Psoas muscle (tissue), 8 donors: ENCODE measurements at regions of chr17 and their contacts with region 1.

Region 1: GRCh38 chr17:5249615-5250014 is 15.0 kb upstream of the SCIMP start:
- DNase-seq: peak in 1 of 2 donors; percentile 32
- ATAC-seq: peak; percentile 68 to 91 (median 74)
- H3K4me3 ChIP-seq: no peak overlapping the region
- H3K27ac ChIP-seq: no peak overlapping the region
- H3K4me1 ChIP-seq: no peaks in the 10 kb centered on the region
- H3K27me3 ChIP-seq: no peaks in the 10 kb centered on the region
- CTCF ChIP-seq: peak; percentile 64

Region 2: GRCh38 chr17:5191541-5192417 is 57.8 kb before region 1 on chr17 and contains the start of gene ZNF594:
- intact Hi-C with region 1: no loop called
- DNase-seq: peak; percentile 98 to 99
- ATAC-seq: peak; percentile 100
- H3K4me3 ChIP-seq: peak within 1 kb of the TSS; percentile 92
- H3K27ac ChIP-seq: peak within 1 kb of the TSS; percentile 83
- H3K4me1 ChIP-seq: peaks cover 12% of the 10 kb centered on the region
- H3K27me3 ChIP-seq: no peaks in the 10 kb centered on the region
- CTCF ChIP-seq: peak; percentile 61
- total RNA-seq, gene ZNF594: 1.5 to 4.0 (median 3.1) TPM

Region 3: GRCh38 chr17:5304636-5305035 is 55.0 kb after region 1 on chr17:
- intact Hi-C with region 1: loop called (anchors 2 to 5 kb)
- DNase-seq: no peak
- ATAC-seq: no peak
- H3K4me3 ChIP-seq: no peak overlapping the region
- H3K27ac ChIP-seq: no peak overlapping the region
- H3K4me1 ChIP-seq: peaks cover 26% of the 10 kb centered on the region
- H3K27me3 ChIP-seq: no peaks in the 10 kb centered on the region
- CTCF ChIP-seq: no peak

Region 4: GRCh38 chr17:5309851-5310250 is 60.2 kb after region 1 on chr17:
- intact Hi-C with region 1: loop called (anchors 2 to 5 kb)
- DNase-seq: no peak
- ATAC-seq: no peak
- H3K4me3 ChIP-seq: no peak overlapping the region
- H3K27ac ChIP-seq: no peak overlapping the region
- H3K4me1 ChIP-seq: peaks cover 6% of the 10 kb centered on the region
- H3K27me3 ChIP-seq: no peaks in the 10 kb centered on the region
- CTCF ChIP-seq: no peak

Region 5: DNA sequence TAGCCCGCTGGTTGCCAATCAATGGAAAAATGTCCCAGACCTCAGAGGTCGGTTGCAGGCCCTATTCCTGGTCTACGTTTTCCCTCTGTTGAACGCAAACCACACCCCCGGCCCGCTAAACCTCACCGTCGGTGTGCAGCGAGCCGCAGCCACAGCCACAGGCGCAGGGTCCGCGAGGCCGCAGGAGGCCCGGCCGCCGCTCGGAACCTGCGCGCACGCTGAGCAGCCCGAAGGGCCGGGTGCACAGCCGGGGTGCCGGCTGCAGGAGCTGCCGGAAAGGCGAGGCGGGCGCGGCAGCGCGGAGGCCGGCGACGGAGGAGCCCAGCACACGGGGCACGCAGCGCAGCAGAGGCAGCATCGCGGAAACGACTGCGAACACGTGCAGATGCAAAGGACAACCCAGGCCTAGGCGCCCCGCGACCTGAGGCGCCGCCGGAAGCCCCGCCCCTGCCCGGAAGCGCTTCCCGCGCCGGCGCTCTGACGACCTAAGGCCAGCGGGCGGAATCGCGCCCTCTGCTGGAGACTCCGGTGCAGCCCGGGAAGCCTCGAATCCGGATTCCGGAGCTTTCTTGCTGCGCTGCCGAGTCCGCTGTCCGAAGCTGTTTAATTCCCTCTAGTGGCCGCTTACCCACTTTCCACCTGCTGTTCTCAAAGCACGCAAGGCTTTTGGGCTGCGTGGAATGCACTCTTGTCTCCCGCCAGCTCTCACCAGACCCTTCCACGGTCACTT is 189.3 kb after region 1 on chr17 and contains the start of gene C1QBP:
- intact Hi-C with region 1: loop called (anchors 1 to 10 kb)
- DNase-seq: peak; percentile 93 to 95
- ATAC-seq: peak; percentile 95 to 98 (median 96)
- H3K4me3 ChIP-seq: peak within 1 kb of the TSS; percentile 90
- H3K27ac ChIP-seq: peak within 1 kb of the TSS; percentile 84
- H3K4me1 ChIP-seq: peaks cover 6% of the 10 kb centered on the region
- H3K27me3 ChIP-seq: no peaks in the 10 kb centered on the region
- CTCF ChIP-seq: peak; percentile 99
- total RNA-seq, gene C1QBP: 107 to 184 (median 128) TPM

Region 6: GRCh38 chr17:6435968-6436367 is 1186.4 kb after region 1 on chr17:
- intact Hi-C with region 1: loop called in 1 of 2 experiments (anchors 10 kb)
- DNase-seq: peak; percentile 54 to 73
- ATAC-seq: peak; percentile 87 to 93 (median 90)
- H3K4me3 ChIP-seq: no peak overlapping the region
- H3K27ac ChIP-seq: no peak overlapping the region
- H3K4me1 ChIP-seq: no peaks in the 10 kb centered on the region
- H3K27me3 ChIP-seq: peaks cover 0 to 16% (median 3%) of the 10 kb centered on the region in 3 donors
- CTCF ChIP-seq: peak; percentile 79